Activated CD4-positive, alpha-beta T cell treated with anti-CD3 and anti-CD28 coated beads, Interleukin-2, amount 10 ng/mL, durations not matched to agents 7 days and 5 days (primary cell): ENCODE measurements at regions of chr17 and their contacts with region 1.

Region 1: DNA sequence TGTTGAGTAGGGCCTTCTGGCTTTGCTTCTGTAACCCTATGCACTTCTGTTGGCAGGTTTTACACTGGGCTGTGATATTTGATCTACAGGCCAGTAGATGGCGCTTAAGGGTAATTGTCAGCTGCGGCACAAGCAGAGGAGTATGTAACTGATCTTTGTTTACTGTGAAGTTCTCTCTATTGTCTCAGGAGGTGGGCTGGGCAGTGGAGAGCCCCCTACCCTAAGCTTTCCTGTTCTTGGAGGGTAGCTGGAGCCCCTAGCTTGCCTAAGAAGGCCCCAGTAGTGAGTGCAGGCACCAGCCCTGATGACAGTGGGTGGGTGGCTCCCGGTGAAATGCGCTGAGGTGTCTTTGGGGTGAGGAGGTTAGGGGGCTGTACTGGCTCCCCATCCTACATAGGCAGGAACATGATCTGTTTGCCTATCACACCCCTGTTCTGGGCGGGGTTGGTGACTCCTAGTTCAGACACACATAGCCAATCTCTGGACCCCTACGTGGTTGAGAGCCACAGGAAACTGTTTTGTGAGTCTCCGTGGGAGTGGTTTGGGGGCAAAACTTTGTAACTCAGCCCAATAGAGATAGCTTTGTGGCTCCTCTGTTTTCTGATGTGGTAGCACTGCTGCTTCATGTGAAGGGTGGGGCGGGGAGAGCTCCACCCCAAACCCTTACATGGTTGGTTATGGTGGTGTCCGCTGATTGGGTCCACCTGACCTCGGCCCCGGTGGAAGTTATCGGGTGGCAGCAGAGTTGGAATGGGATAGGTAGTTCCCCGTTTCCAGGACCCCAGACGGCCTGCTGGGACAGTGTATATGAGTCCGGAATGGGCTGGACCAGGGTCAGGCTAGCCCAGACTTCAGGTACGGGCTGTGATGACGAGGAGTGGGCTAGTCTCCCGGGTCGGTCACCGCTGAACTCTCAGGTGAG is 60.4 kb downstream of the SLFN11 start:
- DNase-seq: peak; percentile 89
- H3K4me3 Mint-ChIP-seq: peak overlapping the region; percentile 81
- H3K27ac Mint-ChIP-seq: peak overlapping the region; percentile 96
- H3K4me1 Mint-ChIP-seq: peaks cover 36% of the 10 kb centered on the region
- H3K27me3 Mint-ChIP-seq: peaks cover 5% of the 10 kb centered on the region

Region 2: DNA sequence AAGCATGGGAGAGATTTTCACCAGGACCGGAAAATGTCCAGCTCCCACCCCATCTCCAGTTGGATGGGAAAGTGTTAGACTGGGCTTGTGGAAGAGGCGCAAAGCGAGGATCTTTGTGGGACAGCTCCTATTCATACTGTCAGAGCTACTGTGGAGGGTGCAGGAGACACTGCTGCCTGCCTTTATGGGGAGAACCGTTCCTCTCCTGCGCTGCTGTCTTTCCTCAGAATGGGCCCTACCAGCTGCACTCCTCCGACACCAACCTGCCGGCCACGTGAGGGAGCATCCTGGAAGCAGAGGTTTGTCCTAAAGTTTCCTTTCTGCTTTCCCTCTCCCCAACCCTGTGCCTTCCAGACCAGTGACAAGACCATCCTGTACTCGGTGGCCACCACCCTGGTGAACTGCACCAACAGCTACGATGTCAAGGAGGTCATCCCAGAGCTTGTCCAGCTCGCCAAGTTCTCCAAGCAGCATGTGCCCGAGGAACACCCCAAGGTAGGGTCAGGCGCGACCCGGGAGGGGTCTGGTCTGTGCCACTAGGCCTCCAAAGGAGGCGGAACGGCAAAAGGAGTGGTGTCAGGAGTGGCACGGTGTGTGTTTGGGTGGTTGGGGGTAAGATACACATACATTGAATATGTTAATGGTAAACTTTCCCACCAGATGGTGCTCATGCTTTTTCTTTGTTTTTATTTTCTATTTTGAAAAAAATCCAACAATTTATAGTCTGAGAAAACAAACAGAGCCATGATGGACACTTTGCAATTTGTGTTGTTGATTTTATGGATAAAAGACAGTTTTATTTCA is 141.9 kb before region 1 on chr17:
- CTCF ChIA-PET with region 1: interaction called, 15 read pairs
- POLR2A ChIA-PET with region 1: no interaction called
- DNase-seq: peak; percentile 49
- H3K4me3 Mint-ChIP-seq: peak overlapping the region; percentile 39
- H3K27ac Mint-ChIP-seq: peak overlapping the region; percentile 84
- H3K4me1 Mint-ChIP-seq: peaks cover 46% of the 10 kb centered on the region
- H3K27me3 Mint-ChIP-seq: no peaks in the 10 kb centered on the region

Region 3: GRCh38 chr17:35486920-35487732 is 174.1 kb after region 1 on chr17:
- CTCF ChIA-PET with region 1: interaction called, 10 read pairs
- POLR2A ChIA-PET with region 1: no interaction called
- DNase-seq: peak; percentile 76
- H3K4me3 Mint-ChIP-seq: peak overlapping the region; percentile 73
- H3K27ac Mint-ChIP-seq: peak overlapping the region; percentile 89
- H3K4me1 Mint-ChIP-seq: peaks cover 71% of the 10 kb centered on the region
- H3K27me3 Mint-ChIP-seq: no peaks in the 10 kb centered on the region

Region 4: DNA sequence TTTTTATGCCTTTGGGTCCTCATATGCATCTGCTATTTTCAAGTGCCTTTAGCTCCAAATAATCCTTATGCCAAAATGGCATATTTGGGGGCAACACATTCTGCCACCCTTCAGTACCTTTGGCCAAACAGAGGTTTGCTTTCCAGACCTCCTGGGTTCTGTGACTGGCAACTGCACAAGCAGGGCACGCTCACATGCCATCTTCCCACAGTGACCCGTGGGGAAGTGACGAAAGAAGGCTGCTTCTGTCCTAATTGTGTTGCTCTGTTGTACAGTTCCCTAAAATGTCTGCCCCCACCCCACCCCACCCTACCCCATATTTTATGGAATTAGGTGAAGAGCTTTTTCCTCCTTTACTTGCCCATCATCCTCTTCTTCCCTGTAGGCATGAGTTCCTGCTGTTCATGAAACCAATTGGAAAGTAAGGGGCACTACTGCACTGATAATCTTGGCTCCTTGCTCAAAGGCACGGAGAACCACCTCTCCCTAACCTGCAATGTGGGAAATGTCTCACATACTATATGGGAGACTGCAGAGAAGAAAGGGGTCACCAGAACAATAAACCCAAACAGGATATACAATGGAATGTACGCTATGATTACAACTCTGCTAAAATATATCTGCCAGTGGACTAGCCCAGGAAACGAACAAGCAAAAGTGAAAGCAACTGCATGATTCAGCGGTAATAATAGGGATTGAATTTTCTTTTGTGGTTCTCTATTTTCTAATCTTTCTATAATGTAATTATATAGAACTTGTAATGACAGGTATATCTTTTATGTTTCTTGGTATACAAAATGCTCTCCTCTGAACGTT is 227.7 kb after region 1 on chr17:
- CTCF ChIA-PET with region 1: interaction called, 10 read pairs
- POLR2A ChIA-PET with region 1: interaction called, 3 read pairs
- DNase-seq: peak; percentile 41
- H3K4me3 Mint-ChIP-seq: peak overlapping the region; percentile 84
- H3K27ac Mint-ChIP-seq: peak overlapping the region; percentile 98
- H3K4me1 Mint-ChIP-seq: peaks cover 57% of the 10 kb centered on the region
- H3K27me3 Mint-ChIP-seq: no peaks in the 10 kb centered on the region